ENCODE measurements at regions of chr7 and their contacts with region 1.

Region 1: GRCh38 chr7:111756687-111757178 is 194.4 kb upstream of the IMMP2L start:
- DNase-seq: no peak

Region 2: GRCh38 chr7:111517549-111517951 is 239.2 kb before region 1 on chr7:
- intact Hi-C with region 1: no loop called
- DNase-seq: no peak

Region 3: DNA sequence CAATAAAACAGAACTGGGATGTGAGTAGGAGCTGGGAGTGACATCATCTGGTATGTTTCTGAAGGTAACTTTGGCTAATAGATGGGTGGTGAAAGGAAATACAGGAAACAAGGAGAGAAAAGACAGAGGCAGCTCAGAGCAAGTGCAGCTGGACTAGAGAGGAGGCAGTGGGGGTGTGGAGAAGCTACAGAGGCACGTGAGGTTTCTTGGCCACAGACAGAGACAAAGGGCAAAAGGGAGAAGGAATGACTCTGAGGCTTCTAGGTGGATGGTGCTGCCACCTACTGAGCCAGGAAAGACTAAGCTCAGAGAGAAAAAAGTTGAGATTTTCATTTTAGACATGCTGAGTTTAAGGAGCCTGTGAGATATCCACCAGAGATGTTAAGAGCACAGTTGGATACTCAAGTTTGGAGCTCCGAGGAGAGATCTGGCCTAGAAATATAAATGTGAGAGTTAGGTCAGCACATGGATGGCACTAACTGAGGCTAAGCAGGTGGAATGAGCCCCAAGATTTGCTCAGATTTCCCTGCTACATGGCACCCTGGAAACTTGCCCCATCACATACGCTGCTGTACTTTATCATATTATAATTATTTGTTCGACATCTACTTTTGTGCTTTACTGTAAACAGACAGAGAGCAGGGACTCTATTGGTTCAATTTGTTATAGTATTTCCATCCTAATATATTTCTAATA is 98.6 kb after region 1 on chr7:
- intact Hi-C with region 1: loop called (anchors 5 kb)
- DNase-seq: no peak

Region 4: DNA sequence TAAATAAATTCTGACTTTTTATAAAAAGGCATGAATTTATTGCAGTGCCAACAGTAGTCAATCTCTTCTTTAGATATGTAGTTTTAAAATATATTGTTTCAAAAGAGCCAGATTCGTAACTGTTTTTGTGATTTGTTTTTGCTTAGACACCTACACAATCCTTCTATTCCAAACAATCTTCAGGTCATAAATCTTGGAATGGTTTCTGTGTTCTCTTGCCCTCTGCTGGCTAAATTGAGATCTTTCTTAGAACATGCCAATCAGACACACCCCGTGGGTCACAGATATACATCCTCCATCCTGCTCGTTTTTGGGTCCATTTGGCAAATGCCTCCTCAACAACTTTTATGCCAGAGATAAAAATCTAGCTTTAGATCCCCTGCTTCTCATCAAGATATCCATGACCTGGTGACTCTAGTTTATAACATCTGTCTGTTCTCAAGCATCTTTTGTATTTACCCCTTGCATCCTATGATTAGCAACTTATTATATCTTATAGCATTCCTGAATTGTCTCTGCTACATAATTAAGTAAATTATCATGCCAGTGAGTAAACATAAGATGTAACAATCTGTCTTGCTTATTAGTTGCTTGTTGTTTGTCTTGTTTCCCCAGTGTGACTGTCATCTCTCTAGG is 658.2 kb after region 1 on chr7:
- intact Hi-C with region 1: loop called (anchors 5 kb)
- DNase-seq: no peak

Measured in cardiac septum (tissue), 1 donor.